ENCODE measurements at regions of chr3 and their contacts with region 1.

Region 1: DNA sequence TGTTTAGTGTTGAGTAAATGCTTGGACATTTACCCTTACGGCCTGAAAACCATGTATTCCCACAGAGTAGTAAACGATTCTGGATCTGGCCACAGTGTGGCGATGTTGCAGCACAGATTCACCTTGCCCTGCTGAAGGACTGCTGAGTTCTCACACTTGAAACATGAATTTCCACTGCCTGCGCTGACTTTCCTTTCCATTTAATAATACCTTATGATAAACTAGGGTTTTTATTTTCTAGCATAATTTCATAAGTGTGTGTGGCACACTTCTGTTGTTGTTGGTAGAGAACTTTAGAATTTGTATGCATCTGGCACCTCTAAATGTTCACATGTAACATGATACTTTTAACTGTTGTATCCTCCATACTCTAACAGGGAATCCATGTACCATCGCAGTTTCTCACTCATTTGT is 53.9 kb downstream of the C3orf38 start:
- DNase-seq: peak; percentile 74
- H3K4me3 ChIP-seq: no peak overlapping the region
- H3K27ac ChIP-seq: no peak overlapping the region
- H3K4me1 ChIP-seq: no peaks in the 10 kb centered on the region
- H3K27me3 ChIP-seq: no peaks in the 10 kb centered on the region
- CTCF ChIP-seq: peak; percentile 45 to 83 (median 69)
- EP300 ChIP-seq: no peak
- POLR2A ChIP-seq: no peak

Region 2: GRCh38 chr3:88137836-88138235 is 65.8 kb before region 1 on chr3:
- intact Hi-C with region 1: no loop called
- DNase-seq: no peak
- H3K4me3 ChIP-seq: no peak overlapping the region
- H3K27ac ChIP-seq: no peak overlapping the region
- H3K4me1 ChIP-seq: peaks cover 0 to 20% (median 9%) of the 10 kb centered on the region in 4 donors
- H3K27me3 ChIP-seq: no peaks in the 10 kb centered on the region
- CTCF ChIP-seq: no peak
- EP300 ChIP-seq: no peak
- POLR2A ChIP-seq: no peak

Region 3: DNA sequence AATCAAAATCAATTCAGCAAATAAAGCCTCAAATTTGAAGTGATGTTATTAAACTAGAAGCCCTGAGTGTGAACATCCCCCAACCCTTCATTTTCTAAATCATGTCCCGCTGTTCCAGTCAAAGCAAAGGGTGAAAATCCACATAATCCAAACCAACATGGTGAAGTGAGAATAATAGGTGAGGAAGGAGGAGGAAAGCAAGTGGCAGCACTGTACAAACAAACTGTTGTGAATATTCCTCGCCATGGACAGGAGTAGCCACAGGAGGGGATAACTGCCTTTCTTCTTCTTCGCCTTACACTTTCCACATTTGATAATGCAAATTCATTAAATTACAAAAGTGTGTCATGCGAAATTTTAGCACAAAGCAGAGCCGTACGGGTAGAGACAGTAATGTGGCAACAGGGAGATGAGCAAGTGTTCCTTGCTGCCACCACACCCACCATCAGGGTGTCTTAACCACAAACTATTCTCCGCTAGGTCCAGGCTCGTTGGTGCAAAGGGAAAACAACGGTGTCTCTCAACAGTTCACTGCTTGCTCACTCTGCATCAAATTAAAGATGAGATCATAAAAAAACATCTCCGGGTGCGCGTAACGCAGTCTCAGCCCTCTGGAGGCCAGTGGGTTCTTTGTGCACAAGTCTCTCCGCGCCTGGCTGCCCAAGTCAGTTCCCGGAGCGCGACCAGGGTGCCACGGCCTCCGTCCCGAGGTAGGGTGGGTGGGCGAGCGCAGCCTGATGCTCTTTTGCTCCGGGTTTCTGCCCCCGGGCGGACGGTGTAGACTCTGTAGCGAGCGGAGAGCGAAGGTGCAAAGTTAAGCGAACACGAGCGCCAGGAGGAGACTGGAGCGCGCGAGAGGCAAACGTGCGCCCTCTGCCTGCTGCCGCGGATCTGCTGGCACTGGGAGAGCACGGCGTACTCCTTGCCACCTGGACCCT is 910.5 kb after region 1 on chr3:
- intact Hi-C with region 1: loop called (anchors 10 kb)
- DNase-seq: peak; percentile 76
- H3K4me3 ChIP-seq: peak overlapping the region; percentile 37 to 49 (median 44)
- H3K27ac ChIP-seq: peak overlapping the region; percentile 5 to 75 (median 42)
- H3K4me1 ChIP-seq: peaks cover 0 to 10% (median 4%) of the 10 kb centered on the region in 4 donors
- H3K27me3 ChIP-seq: peaks cover 0 to 13% (median 0%) of the 10 kb centered on the region in 3 donors
- CTCF ChIP-seq: peak in 3 of 4 experiments; percentile 29 to 58 (median 35)
- EP300 ChIP-seq: no peak
- POLR2A ChIP-seq: no peak

Region 4: DNA sequence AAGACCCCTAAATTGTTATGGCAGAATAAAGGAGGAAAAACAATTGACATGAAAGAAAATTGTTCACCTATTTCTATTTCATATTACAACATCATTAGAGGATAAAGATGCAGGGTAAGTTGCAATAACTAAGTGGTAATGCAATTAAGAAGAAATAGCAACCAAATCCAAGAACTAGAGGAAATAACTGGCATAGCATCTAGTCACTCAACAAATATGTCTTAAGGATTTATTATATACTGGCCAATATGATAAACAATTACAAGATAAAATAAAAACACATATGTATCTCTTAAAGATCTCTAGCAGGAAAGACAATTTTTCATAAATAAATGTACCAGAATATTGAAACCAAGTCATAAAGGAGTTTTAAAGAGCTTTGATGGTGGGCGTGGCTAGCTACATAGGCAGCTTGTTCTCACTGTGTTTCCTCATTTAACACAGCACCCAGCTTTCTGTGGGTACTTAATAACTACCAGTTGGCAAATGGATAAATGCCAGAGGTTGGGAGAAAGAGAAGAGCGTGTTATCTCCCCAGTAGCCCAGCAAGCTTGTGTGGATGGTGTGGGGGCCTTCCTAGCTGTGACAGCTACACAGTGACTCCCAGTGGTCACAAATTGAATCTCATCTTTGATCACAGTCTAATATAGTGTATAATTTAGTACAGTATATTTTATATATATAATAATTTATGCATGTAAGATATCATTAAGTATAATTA is 1887.7 kb after region 1 on chr3:
- intact Hi-C with region 1: loop called (anchors 10 kb)
- DNase-seq: peak; percentile 72
- H3K4me3 ChIP-seq: no peak overlapping the region
- H3K27ac ChIP-seq: no peak overlapping the region
- H3K4me1 ChIP-seq: peaks cover 0 to 9% (median 4%) of the 10 kb centered on the region in 4 donors
- H3K27me3 ChIP-seq: no peaks in the 10 kb centered on the region
- CTCF ChIP-seq: peak in 3 of 4 experiments; percentile 29 to 55 (median 39)
- EP300 ChIP-seq: no peak
- POLR2A ChIP-seq: no peak

Region 5: GRCh38 chr3:90184861-90185260 is 1981.2 kb after region 1 on chr3:
- intact Hi-C with region 1: loop called (anchors 2 kb)
- DNase-seq: no peak
- H3K4me3 ChIP-seq: no peak overlapping the region
- H3K27ac ChIP-seq: no peak overlapping the region
- H3K4me1 ChIP-seq: peaks cover 0 to 6% (median 2%) of the 10 kb centered on the region in 4 donors
- H3K27me3 ChIP-seq: peaks cover 0 to 6% (median 3%) of the 10 kb centered on the region in 3 donors
- CTCF ChIP-seq: no peak
- EP300 ChIP-seq: no peak
- POLR2A ChIP-seq: no peak

Measured in sigmoid colon (tissue), 7 donors.